ENCODE measurements at regions of chr4 and their contacts with region 1.

Region 1: GRCh38 chr4:147629783-147630730 is 12.9 kb downstream of the TMEM184C start:
- DNase-seq: no peak
- ATAC-seq: no peak
- H3K4me3 ChIP-seq: no peak overlapping the region
- H3K4me3 Mint-ChIP-seq: no peak overlapping the region
- H3K27ac ChIP-seq: no peak overlapping the region
- H3K27ac Mint-ChIP-seq: no peak overlapping the region
- H3K4me1 ChIP-seq: no peaks in the 10 kb centered on the region
- H3K4me1 Mint-ChIP-seq: peaks cover 10% of the 10 kb centered on the region
- H3K27me3 ChIP-seq: no peaks in the 10 kb centered on the region
- H3K27me3 Mint-ChIP-seq: no peaks in the 10 kb centered on the region
- CTCF ChIP-seq: no peak

Region 2: DNA sequence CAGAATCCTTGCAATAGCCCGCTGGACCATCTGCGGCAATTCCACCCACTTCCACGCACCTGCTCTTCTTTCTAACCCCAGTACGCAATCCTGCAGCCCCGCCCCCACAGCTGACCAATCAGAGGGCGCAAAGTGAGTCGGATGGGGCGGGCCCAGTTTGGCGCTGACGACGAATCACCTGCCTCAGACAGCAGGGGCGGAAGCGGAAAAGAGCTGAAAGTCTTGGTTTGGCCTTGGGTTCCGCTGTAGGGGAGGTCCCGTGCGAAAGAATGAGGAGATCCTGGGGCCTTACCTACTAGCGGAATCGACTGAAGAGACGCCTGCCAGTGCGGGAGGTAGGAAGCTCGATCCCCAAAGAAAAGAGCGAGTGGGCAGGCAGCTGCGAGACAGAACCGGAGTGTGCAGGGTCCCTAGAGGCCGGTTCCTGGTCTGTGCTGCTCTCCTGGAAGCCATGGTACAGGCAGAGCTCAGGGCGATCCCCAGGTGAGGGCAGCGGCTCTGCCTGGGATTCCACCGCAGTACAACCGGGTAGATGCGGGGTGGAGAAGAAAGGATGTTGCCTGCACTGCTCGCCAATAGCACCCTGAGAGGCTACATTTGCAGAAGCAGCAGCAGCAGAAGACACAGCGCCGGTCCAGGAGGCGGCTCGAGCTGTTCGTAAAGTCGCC is 12.8 kb before region 1 on chr4 and contains the start of gene TMEM184C:
- CTCF ChIA-PET with region 1: interaction called, 3 read pairs
- POLR2A ChIA-PET with region 1: interaction called, 10 read pairs
- intact Hi-C with region 1: no loop called
- DNase-seq: peak; percentile 96 to 99 (median 98)
- ATAC-seq: peak; percentile 95
- H3K4me3 ChIP-seq: peak within 1 kb of the TSS; percentile 78
- H3K4me3 Mint-ChIP-seq: peak within 1 kb of the TSS; percentile 89
- H3K27ac ChIP-seq: peak within 1 kb of the TSS; percentile 80 to 90
- H3K27ac Mint-ChIP-seq: peak within 1 kb of the TSS; percentile 92
- H3K4me1 ChIP-seq: peaks cover 29% of the 10 kb centered on the region
- H3K4me1 Mint-ChIP-seq: peaks cover 38% of the 10 kb centered on the region
- H3K27me3 ChIP-seq: no peaks in the 10 kb centered on the region
- H3K27me3 Mint-ChIP-seq: no peaks in the 10 kb centered on the region
- CTCF ChIP-seq: no peak
- total RNA-seq, gene TMEM184C: 10.0 to 10.1 TPM

Region 3: DNA sequence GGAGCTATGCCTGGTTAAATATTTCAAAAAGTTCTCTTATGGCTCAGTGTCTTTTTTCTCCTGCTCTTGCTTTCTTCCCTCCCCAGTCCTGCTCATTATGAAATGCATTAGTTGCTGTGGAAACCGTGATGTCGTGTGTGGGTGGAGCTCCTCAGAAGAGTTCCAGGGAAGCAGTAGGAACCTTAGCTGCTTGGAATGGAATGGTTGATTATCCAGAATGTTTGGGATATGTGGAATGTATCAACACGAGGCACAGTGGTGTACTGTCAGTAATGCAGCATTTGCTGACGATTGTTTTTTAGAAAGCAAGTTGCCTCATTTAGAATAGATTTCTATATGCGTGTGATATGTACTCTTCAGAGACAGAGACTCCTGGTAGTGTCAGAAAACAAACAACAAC is 435.0 kb after region 1 on chr4:
- CTCF ChIA-PET with region 1: no interaction called
- POLR2A ChIA-PET with region 1: no interaction called
- intact Hi-C with region 1: loop called in 1 of 2 experiments (anchors 10 kb)
- DNase-seq: no peak
- ATAC-seq: no peak
- H3K4me3 ChIP-seq: no peak overlapping the region
- H3K4me3 Mint-ChIP-seq: no peak overlapping the region
- H3K27ac ChIP-seq: no peak overlapping the region
- H3K27ac Mint-ChIP-seq: no peak overlapping the region
- H3K4me1 ChIP-seq: peaks cover 18% of the 10 kb centered on the region
- H3K4me1 Mint-ChIP-seq: peaks cover 29% of the 10 kb centered on the region
- H3K27me3 ChIP-seq: no peaks in the 10 kb centered on the region
- H3K27me3 Mint-ChIP-seq: no peaks in the 10 kb centered on the region
- CTCF ChIP-seq: no peak